Naive thymus-derived CD4-positive, alpha-beta T cell (primary cell): ENCODE measurements at regions of chr2 and their contacts with region 1.

Region 1: DNA sequence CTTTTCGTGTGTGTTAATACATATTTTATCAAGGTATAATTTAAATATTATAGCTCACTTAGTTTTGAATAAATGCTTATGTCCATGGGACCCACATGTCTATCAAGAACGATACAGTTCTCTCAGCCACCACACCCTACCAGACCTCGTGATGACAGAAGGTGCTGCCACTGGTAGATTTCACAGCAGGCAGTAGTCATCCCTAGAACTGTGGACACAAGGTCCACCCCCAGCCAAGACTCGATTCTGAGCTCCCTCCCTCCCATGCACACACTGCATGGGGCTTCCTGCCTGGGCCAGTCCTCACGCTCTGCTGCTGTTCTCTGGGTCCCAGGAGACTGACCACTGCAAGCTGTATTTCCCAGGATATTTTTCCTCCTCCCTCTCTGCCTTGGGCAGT is 26.5 kb upstream of the CREB1 start:
- DNase-seq: no peak
- ATAC-seq: peak; percentile 60
- H3K4me3 ChIP-seq: no peak overlapping the region
- H3K4me3 Mint-ChIP-seq: no peak overlapping the region
- H3K27ac ChIP-seq: no peak overlapping the region
- H3K27ac Mint-ChIP-seq: peak overlapping the region in 1 of 9 donors; percentile 50
- H3K4me1 ChIP-seq: peaks cover 11 to 30% of the 10 kb centered on the region in 2 donors
- H3K4me1 Mint-ChIP-seq: peaks cover 37 to 72% (median 52%) of the 10 kb centered on the region in 7 donors
- H3K27me3 ChIP-seq: no peaks in the 10 kb centered on the region
- H3K27me3 Mint-ChIP-seq: no peaks in the 10 kb centered on the region

Region 2: DNA sequence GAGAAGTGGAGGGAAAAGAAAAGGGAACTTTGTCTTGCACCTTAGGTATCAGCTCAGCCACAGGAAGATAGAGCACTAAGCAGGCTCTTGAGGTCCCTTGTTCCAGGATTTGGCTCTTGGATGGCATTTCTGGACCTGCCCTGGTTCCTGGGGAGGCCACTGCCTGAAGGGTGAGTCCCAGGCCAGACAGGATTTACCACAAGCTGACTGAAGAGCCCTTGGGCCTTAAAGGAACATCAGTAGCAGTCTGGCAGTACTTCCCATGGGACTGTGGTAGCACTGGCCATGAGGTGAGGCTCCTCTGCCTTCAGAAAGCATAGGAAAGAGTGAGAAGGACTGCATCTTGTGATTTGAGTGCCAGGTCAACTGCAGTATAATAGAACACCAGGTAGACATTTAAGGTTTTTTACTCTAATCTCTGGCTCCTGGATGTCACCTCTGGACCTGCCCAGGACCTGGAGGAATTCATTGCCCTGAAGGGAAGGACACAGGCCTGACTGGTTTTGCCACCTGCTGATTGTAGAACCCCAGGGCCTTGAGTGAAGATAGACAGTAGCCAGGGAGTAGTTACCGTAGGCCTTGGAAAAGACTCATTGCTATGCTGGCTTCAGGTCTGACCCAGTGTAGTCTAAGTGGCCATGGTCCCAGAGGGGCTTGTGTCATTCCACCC is 127.9 kb before region 1 on chr2:
- CTCF ChIA-PET with region 1: no interaction called
- POLR2A ChIA-PET with region 1: no interaction called
- intact Hi-C with region 1: no loop called
- DNase-seq: no peak
- ATAC-seq: no peak
- H3K4me3 ChIP-seq: no peak overlapping the region
- H3K4me3 Mint-ChIP-seq: no peak overlapping the region
- H3K27ac ChIP-seq: no peak overlapping the region
- H3K27ac Mint-ChIP-seq: no peak overlapping the region
- H3K4me1 ChIP-seq: no peaks in the 10 kb centered on the region
- H3K4me1 Mint-ChIP-seq: peaks cover 0 to 2% (median 0%) of the 10 kb centered on the region in 7 donors
- H3K27me3 ChIP-seq: no peaks in the 10 kb centered on the region
- H3K27me3 Mint-ChIP-seq: no peaks in the 10 kb centered on the region

Region 3: GRCh38 chr2:207513551-207514257 is 10.5 kb after region 1 on chr2:
- CTCF ChIA-PET with region 1: no interaction called
- POLR2A ChIA-PET with region 1: no interaction called
- intact Hi-C with region 1: loop called in 1 of 2 experiments (anchors 1 kb)
- DNase-seq: no peak
- ATAC-seq: no peak
- H3K4me3 ChIP-seq: no peak overlapping the region
- H3K4me3 Mint-ChIP-seq: no peak overlapping the region
- H3K27ac ChIP-seq: no peak overlapping the region
- H3K27ac Mint-ChIP-seq: peak overlapping the region in 1 of 9 donors; percentile 39
- H3K4me1 ChIP-seq: no peaks in the 10 kb centered on the region
- H3K4me1 Mint-ChIP-seq: peaks cover 0 to 20% (median 6%) of the 10 kb centered on the region in 7 donors
- H3K27me3 ChIP-seq: no peaks in the 10 kb centered on the region
- H3K27me3 Mint-ChIP-seq: peaks cover 0 to 11% (median 0%) of the 10 kb centered on the region in 5 donors